Panc1 (cell line): ENCODE measurements at regions of chr12 and their contacts with region 1.

Region 1: GRCh38 chr12:49636979-49637755 is 13.8 kb downstream of the PRPF40B start:
- DNase-seq: no peak
- ATAC-seq: peak; percentile 89
- H3K4me3 ChIP-seq: no peak overlapping the region
- H3K27ac ChIP-seq: no peak overlapping the region
- H3K4me1 ChIP-seq: no peaks in the 10 kb centered on the region; the same call in 1 of the 2 replicates
- H3K27me3 ChIP-seq: no peaks in the 10 kb centered on the region
- CTCF ChIP-seq: peak; percentile 83

Region 2: GRCh38 chr12:49279706-49280159 is 357.4 kb before region 1 on chr12:
- CTCF ChIA-PET with region 1: no interaction called
- POLR2A ChIA-PET with region 1: no interaction called
- in situ Hi-C with region 1: no loop called
- intact Hi-C with region 1: no loop called
- DNase-seq: no peak
- ATAC-seq: no peak
- H3K4me3 ChIP-seq: no peak overlapping the region
- H3K27ac ChIP-seq: no peak overlapping the region
- H3K4me1 ChIP-seq: peaks cover 3% of the 10 kb centered on the region
- H3K27me3 ChIP-seq: no peaks in the 10 kb centered on the region
- CTCF ChIP-seq: no peak

Region 3: DNA sequence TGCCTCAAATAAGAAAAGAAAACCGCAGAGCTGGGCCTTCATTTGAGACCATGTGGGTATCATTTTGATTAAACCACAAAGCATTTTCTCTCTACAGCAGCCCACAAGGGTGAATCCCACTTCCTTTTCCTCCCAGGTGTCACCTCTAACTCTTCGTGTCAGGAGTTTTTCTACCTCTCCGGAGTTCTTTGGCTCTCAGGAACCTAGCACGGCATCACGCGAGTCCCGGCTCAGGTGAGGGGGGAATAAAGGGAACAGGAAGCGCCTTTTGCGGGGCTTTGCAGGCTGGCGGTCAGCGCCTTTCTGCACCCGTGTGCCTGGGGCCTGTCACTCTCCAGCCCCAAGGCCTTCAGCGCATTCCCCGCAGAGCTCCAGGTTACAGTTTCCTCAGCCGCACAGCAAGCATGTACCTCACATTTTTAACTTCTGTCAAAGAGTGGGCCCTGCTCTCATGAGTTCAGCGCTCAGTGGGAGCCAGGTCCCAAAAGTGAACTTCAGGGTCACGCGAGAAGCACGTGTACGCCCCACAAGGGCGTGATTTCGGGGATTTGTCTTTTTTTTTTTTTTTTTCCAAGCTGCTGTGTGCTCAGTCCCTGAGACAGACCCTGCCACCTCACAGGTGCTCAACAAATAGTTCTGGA is 14.5 kb before region 1 on chr12:
- CTCF ChIA-PET with region 1: interaction called, 11 read pairs
- POLR2A ChIA-PET with region 1: no interaction called
- in situ Hi-C with region 1: no loop called
- intact Hi-C with region 1: no loop called
- DNase-seq: no peak
- ATAC-seq: peak; percentile 51
- H3K4me3 ChIP-seq: peak overlapping the region; percentile 84 to 95
- H3K27ac ChIP-seq: peak overlapping the region; percentile 93
- H3K4me1 ChIP-seq: peaks cover 9% of the 10 kb centered on the region
- H3K27me3 ChIP-seq: peaks cover 2% of the 10 kb centered on the region; the same call in 1 of the 2 replicates
- CTCF ChIP-seq: no peak

Region 4: DNA sequence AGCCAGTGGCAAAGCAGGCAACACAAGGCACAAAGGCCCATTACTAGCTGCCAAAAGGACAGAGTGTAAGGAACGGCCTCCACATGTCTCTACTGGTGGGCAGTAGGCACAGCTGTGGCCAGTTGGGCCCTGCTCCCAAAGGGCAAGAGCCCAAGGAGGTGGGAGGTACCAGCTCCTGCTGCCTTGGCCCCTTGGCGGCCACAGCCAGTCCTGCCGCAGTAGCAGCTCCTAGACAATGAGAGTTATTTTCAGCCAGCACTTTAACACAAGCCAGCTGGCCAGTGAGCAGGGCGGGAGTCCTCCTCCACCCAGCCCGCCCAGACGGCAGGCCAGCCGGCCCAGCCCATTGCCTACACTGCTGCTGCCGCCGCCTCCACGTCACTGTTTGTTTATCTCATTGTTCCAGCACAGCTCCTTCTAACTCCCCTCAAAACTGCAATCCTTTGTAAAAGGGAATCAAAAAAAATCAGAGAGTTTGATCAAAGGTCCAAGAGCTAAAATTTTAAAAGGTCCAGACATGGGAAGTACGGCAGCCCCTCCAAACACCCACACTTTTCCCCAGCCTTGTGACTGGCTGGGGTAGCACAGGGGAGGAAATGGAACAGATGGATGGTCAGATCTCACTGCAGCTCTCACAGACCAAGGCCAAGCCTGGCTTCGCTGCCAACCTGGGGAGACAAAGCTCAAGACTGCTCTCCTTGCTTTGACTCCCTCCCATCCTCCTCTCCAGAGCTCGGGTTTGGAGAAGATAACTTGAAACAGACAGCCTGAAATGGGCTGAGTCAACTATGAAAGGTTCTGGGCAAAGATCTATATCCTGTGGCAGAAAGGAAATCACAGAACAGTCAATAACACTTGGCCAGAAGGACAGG is 36.5 kb after region 1 on chr12:
- CTCF ChIA-PET with region 1: no interaction called
- POLR2A ChIA-PET with region 1: no interaction called
- in situ Hi-C with region 1: no loop called
- intact Hi-C with region 1: no loop called
- DNase-seq: no peak
- ATAC-seq: peak; percentile 54
- H3K4me3 ChIP-seq: no peak overlapping the region
- H3K27ac ChIP-seq: no peak overlapping the region
- H3K4me1 ChIP-seq: no peaks in the 10 kb centered on the region; the same call in 1 of the 2 replicates
- H3K27me3 ChIP-seq: no peaks in the 10 kb centered on the region
- CTCF ChIP-seq: no peak

Region 5: GRCh38 chr12:49707128-49707811 is 70.1 kb after region 1 on chr12 and contains the start of gene FMNL3:
- CTCF ChIA-PET with region 1: interaction called, 9 read pairs
- POLR2A ChIA-PET with region 1: no interaction called
- in situ Hi-C with region 1: no loop called
- intact Hi-C with region 1: loop called (anchors 2 kb)
- DNase-seq: peak; percentile 46
- ATAC-seq: peak; percentile 97
- H3K4me3 ChIP-seq: peak within 1 kb of the TSS; percentile 75 to 79
- H3K27ac ChIP-seq: peak within 1 kb of the TSS; percentile 80
- H3K4me1 ChIP-seq: peaks cover 16% of the 10 kb centered on the region
- H3K27me3 ChIP-seq: peaks cover 8% of the 10 kb centered on the region; the same call in 1 of the 2 replicates
- CTCF ChIP-seq: peak; percentile 98
- total RNA-seq, gene FMNL3: 25.7 TPM